CD8-positive, alpha-beta memory T cell (primary cell): ENCODE measurements at regions of chr12 and their contacts with region 1.

Region 1: DNA sequence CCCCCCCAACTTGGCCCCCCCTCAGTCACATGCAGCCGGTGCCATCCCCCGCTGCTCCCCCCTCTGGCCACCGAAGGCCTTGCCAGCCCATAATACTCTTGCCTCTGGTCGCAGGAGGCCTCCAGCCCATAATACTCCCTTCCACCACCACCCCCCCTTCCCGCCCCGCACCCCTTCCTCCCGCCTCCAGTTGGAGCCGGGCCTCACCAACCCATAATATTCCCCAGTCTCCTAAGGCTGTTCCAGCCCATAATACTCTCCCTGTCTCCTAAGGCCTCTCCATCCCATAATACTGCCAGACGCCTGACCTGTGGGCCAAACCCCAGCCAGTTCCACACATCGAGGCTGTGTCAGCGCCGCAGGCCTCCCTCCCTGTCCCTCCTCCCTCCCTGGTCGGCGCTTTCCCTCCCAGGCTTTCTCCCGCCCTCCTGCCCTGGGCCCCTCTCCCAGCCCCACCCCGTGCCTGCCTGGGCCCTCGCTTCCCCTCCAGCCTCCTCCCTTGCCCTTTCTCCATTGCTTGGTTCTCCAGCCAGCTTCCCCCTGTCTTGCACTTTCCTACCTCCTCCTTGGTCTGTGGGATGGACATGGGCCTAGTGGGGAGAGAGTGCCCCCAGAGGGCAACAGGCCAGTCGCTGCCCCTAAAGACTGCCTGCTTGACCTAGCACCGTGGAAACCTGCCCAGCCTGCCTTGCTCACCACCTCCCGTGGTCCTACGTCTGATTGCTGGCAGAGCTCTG is 6.8 kb upstream of the CHD4 start:
- DNase-seq: peak; percentile 48 to 84 (median 55)
- H3K4me3 ChIP-seq: no peak overlapping the region
- H3K4me3 Mint-ChIP-seq: peak overlapping the region in 2 of 7 donors; percentile 36 to 72
- H3K27ac ChIP-seq: peak overlapping the region; percentile 67
- H3K27ac Mint-ChIP-seq: peak overlapping the region; percentile 63 to 93 (median 88)
- H3K4me1 ChIP-seq: peaks cover 24% of the 10 kb centered on the region
- H3K4me1 Mint-ChIP-seq: peaks cover 36 to 55% (median 43%) of the 10 kb centered on the region in 3 donors
- H3K27me3 ChIP-seq: no peaks in the 10 kb centered on the region
- H3K27me3 Mint-ChIP-seq: no peaks in the 10 kb centered on the region

Region 2: DNA sequence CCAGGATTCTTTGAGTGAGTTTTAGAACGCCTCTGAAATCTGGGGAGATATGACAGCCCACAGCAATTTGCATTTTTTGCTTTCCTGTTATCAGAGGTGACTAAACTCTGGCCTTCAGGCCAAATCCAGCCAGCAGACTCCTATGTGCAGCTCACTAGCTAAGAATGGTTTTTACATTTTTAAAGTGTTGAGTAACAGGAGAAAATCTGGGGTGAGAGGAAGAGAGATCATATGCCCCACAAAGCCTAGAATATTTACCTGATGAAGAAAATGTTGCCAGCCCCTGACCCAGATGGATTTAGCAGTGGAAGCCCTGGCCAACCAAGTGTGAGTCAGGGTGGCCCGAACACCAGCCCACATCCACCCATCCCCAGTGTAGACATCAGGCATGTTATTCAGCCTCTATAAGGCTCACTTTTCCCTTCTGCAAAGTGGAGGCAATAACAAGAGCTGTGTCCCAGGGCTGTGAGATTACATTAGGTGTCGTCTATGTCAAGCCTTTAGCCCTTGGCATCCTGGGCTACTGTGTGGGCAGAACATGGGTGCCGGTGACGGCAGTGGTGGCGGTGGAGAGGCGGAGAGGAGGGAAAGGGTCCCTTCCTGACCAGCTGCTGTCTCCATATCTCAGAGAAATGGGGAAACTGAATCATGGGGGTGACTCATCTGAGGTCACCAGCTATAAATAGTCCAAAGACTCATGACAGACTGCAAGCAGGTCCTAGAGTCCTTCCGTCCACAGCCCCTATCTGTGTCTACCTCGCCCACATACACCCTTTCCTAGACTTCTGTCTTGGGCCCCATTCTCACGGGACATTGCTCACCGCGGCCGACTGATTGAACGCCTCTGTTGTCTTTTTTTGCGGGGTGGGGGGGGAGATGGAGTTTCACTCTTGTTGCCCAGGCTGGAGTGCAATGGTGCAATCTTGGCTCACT is 446.4 kb before region 1 on chr12:
- CTCF ChIA-PET with region 1: no interaction called
- POLR2A ChIA-PET with region 1: no interaction called
- DNase-seq: peak in 1 of 5 donors; percentile 60
- H3K4me3 ChIP-seq: no peak overlapping the region
- H3K4me3 Mint-ChIP-seq: peak overlapping the region in 4 of 7 donors; percentile 28 to 55 (median 40)
- H3K27ac ChIP-seq: peak overlapping the region; percentile 14
- H3K27ac Mint-ChIP-seq: peak overlapping the region in 3 of 8 donors; percentile 46 to 72 (median 70)
- H3K4me1 ChIP-seq: peaks cover 24% of the 10 kb centered on the region
- H3K4me1 Mint-ChIP-seq: peaks cover 21 to 24% (median 22%) of the 10 kb centered on the region in 3 donors
- H3K27me3 ChIP-seq: no peaks in the 10 kb centered on the region
- H3K27me3 Mint-ChIP-seq: peaks cover 9 to 27% of the 10 kb centered on the region in 2 donors

Region 3: GRCh38 chr12:6632026-6632983 is 18.4 kb after region 1 on chr12:
- CTCF ChIA-PET with region 1: interaction called, 9 read pairs
- POLR2A ChIA-PET with region 1: interaction called, 15 read pairs
- DNase-seq: peak; percentile 30 to 69 (median 56)
- H3K4me3 ChIP-seq: peak overlapping the region; percentile 67
- H3K4me3 Mint-ChIP-seq: peak overlapping the region; percentile 82 to 95 (median 92)
- H3K27ac ChIP-seq: peak overlapping the region; percentile 60
- H3K27ac Mint-ChIP-seq: peak overlapping the region; percentile 92 to 100 (median 98)
- H3K4me1 ChIP-seq: peaks cover 48% of the 10 kb centered on the region
- H3K4me1 Mint-ChIP-seq: peaks cover 64 to 74% (median 66%) of the 10 kb centered on the region in 3 donors
- H3K27me3 ChIP-seq: no peaks in the 10 kb centered on the region
- H3K27me3 Mint-ChIP-seq: no peaks in the 10 kb centered on the region